CD8-positive, alpha-beta T cell (primary cell): ENCODE measurements at regions of chr15 and their contacts with region 1.

Region 1: GRCh38 chr15:69853581-69853980 is 244.1 kb downstream of the TLE3 start:
- DNase-seq: no peak
- ATAC-seq: no peak
- H3K4me3 ChIP-seq: no peak overlapping the region
- H3K4me3 Mint-ChIP-seq: no peak overlapping the region
- H3K27ac ChIP-seq: no peak overlapping the region
- H3K27ac Mint-ChIP-seq: no peak overlapping the region
- H3K4me1 ChIP-seq: peaks cover 19% of the 10 kb centered on the region
- H3K4me1 Mint-ChIP-seq: peaks cover 17% of the 10 kb centered on the region
- H3K27me3 ChIP-seq: no peaks in the 10 kb centered on the region
- H3K27me3 Mint-ChIP-seq: no peaks in the 10 kb centered on the region
- CTCF ChIP-seq: no peak

Region 2: GRCh38 chr15:69623392-69624152 is 230.0 kb before region 1 on chr15:
- CTCF ChIA-PET with region 1: no interaction called
- POLR2A ChIA-PET with region 1: no interaction called
- intact Hi-C with region 1: no loop called
- DNase-seq: peak in 2 of 9 experiments; percentile 9 to 38
- ATAC-seq: no peak
- H3K4me3 ChIP-seq: no peak overlapping the region
- H3K4me3 Mint-ChIP-seq: no peak overlapping the region
- H3K27ac ChIP-seq: no peak overlapping the region
- H3K27ac Mint-ChIP-seq: no peak overlapping the region
- H3K4me1 ChIP-seq: no peaks in the 10 kb centered on the region
- H3K4me1 Mint-ChIP-seq: peaks cover 3% of the 10 kb centered on the region
- H3K27me3 ChIP-seq: peaks cover 0 to 3% of the 10 kb centered on the region in 2 experiments
- H3K27me3 Mint-ChIP-seq: peaks cover 2% of the 10 kb centered on the region
- CTCF ChIP-seq: no peak

Region 3: GRCh38 chr15:69919816-69920215 is 66.2 kb after region 1 on chr15:
- CTCF ChIA-PET with region 1: no interaction called
- POLR2A ChIA-PET with region 1: no interaction called
- intact Hi-C with region 1: loop called in 1 of 2 experiments (anchors 10 kb)
- DNase-seq: no peak
- ATAC-seq: no peak
- H3K4me3 ChIP-seq: no peak overlapping the region
- H3K4me3 Mint-ChIP-seq: no peak overlapping the region
- H3K27ac ChIP-seq: no peak overlapping the region
- H3K27ac Mint-ChIP-seq: no peak overlapping the region
- H3K4me1 ChIP-seq: no peaks in the 10 kb centered on the region
- H3K4me1 Mint-ChIP-seq: no peaks in the 10 kb centered on the region
- H3K27me3 ChIP-seq: no peaks in the 10 kb centered on the region
- H3K27me3 Mint-ChIP-seq: no peaks in the 10 kb centered on the region
- CTCF ChIP-seq: no peak